ENCODE measurements at regions of chr10 and their contacts with region 1.

Region 1: DNA sequence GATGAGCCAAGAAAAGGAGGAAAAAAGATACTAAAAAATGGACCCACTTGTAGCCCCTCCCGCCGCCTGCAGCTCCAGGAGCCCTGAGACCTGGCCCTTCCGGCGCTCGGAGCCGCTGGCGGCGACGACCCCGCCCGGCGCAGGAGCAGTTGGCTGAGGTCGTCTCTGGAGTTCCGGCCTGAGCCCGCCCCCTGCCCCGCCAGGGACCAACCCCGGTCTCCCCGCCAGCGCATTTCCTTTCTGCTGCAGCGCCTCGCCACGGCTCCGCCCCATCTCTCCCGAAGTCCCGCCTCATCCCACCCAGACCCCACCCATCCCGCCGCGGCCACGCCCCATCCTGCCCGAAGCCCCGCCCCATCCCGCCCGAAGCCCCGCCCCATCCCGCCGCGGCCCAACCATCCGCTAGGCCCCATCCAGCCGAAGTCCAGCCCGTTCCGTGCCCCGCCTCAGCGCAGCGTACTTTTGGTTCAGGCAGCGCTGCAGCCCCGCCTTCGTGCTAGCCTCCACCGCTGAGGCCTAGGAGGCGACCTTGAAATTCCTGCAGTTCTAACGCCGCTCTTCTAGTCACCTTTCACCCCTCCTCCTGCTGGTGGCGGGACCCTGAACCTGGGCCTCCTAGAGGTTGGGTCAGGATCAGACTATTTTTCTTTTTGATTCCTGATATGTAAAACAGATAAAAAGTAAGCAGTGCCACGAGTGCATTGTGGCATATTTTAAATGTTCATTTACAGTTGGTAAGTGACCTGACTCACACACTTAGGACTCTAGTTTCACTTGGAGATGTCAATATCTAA is at the start of gene STN1:
- DNase-seq: peak; percentile 93 to 96 (median 95)
- H3K4me3 ChIP-seq: peak within 1 kb of the TSS; percentile 69 to 95
- H3K4me3 Mint-ChIP-seq: peak within 1 kb of the TSS; percentile 92 to 99 (median 96)
- H3K27ac ChIP-seq: peak within 1 kb of the TSS; percentile 82
- H3K27ac Mint-ChIP-seq: peak within 1 kb of the TSS; percentile 91 to 98 (median 95)
- H3K4me1 ChIP-seq: peaks cover 53% of the 10 kb centered on the region
- H3K4me1 Mint-ChIP-seq: peaks cover 18 to 50% (median 30%) of the 10 kb centered on the region in 4 donors
- H3K27me3 ChIP-seq: no peaks in the 10 kb centered on the region
- H3K27me3 Mint-ChIP-seq: no peaks in the 10 kb centered on the region
- total RNA-seq, gene STN1: 30.4 to 31.6 TPM

Region 2: DNA sequence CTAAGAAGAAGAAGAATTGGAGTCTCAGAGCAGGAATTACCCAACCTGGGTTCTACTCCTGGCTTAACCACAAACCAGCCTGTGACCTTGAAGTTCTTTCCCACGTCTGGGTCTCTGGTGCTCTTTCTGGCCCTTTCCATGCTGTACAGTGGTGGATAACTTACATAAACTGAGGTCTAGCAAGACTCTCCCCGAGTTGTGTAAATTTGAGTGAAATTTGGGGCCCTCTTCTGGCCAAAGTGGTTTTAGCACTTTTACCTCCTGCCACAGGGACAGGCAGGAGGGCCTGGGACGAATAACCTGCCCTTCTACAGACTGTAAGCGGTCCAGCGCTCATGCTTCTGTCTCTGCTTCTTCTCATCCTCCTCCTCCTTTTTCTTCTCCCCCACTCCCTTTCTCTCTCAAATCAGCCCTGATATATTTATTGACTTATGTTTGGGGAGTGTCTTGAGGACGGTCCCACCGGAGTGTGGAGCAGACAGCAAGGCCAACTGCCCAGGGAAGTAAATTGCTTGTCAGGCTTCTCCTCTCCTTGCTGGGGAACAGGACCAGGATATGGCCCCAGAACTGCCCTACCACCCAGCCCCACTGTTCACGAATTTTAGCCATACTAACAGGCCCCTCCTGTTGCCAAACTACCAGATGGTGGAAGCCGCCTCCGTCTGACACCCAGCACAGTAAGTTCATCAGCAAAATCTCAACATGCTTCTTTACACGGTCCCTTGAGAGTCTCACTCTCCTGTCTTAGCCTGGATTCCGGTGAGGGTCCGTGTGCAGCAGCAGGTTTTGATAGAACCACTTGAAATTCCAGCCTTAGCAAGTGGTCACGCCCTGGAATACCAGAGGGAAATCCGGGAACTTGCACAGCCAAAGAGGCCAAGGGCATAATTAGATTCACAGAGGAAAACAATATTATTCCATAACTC is 58.8 kb before region 1 on chr10:
- CTCF ChIA-PET with region 1: no interaction called
- POLR2A ChIA-PET with region 1: no interaction called
- intact Hi-C with region 1: no loop called
- DNase-seq: peak; percentile 51 to 58 (median 54)
- H3K4me3 ChIP-seq: no peak overlapping the region
- H3K4me3 Mint-ChIP-seq: peak overlapping the region in 1 of 8 donors; percentile 15
- H3K27ac ChIP-seq: no peak overlapping the region
- H3K27ac Mint-ChIP-seq: no peak overlapping the region
- H3K4me1 ChIP-seq: peaks cover 13% of the 10 kb centered on the region
- H3K4me1 Mint-ChIP-seq: peaks cover 5 to 12% (median 8%) of the 10 kb centered on the region in 4 donors
- H3K27me3 ChIP-seq: peaks cover 8% of the 10 kb centered on the region
- H3K27me3 Mint-ChIP-seq: peaks cover 5 to 13% of the 10 kb centered on the region in 2 donors

Region 3: GRCh38 chr10:103895411-103896186 is 22.7 kb before region 1 on chr10:
- CTCF ChIA-PET with region 1: interaction called, 10 read pairs
- POLR2A ChIA-PET with region 1: interaction called, 25 read pairs
- intact Hi-C with region 1: no loop called
- DNase-seq: no peak
- H3K4me3 ChIP-seq: no peak overlapping the region
- H3K4me3 Mint-ChIP-seq: peak overlapping the region in 4 of 8 donors; percentile 11 to 87 (median 48)
- H3K27ac ChIP-seq: peak overlapping the region; percentile 11
- H3K27ac Mint-ChIP-seq: peak overlapping the region; percentile 38 to 95 (median 86)
- H3K4me1 ChIP-seq: peaks cover 40% of the 10 kb centered on the region
- H3K4me1 Mint-ChIP-seq: peaks cover 39 to 64% (median 51%) of the 10 kb centered on the region in 4 donors
- H3K27me3 ChIP-seq: no peaks in the 10 kb centered on the region
- H3K27me3 Mint-ChIP-seq: no peaks in the 10 kb centered on the region

Region 4: DNA sequence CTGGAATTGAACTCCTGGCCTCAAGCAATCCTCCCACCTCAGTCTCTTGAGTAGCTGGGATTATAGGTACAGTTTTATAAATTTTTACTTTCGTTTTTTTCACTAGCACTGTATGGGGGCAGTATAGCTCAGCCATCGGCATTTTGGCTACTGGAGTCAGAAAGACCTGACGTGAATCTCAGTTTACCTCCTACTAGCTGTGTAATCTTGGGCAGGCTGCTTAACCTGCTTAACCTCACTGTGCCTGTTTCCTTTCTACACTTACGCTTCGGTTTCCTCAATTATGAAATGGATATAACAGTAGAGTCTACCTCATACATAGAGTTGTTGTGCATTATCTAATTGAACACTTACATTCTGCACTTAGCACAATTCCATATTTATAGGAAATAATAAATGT is 17.0 kb before region 1 on chr10:
- CTCF ChIA-PET with region 1: interaction called, 10 read pairs
- POLR2A ChIA-PET with region 1: interaction called, 25 read pairs
- intact Hi-C with region 1: no loop called
- DNase-seq: no peak
- H3K4me3 ChIP-seq: no peak overlapping the region
- H3K4me3 Mint-ChIP-seq: peak overlapping the region; percentile 12 to 73 (median 44)
- H3K27ac ChIP-seq: peak overlapping the region; percentile 33
- H3K27ac Mint-ChIP-seq: peak overlapping the region; percentile 15 to 89 (median 74)
- H3K4me1 ChIP-seq: peaks cover 53% of the 10 kb centered on the region
- H3K4me1 Mint-ChIP-seq: peaks cover 28 to 65% (median 43%) of the 10 kb centered on the region in 4 donors
- H3K27me3 ChIP-seq: no peaks in the 10 kb centered on the region
- H3K27me3 Mint-ChIP-seq: no peaks in the 10 kb centered on the region

Region 5: GRCh38 chr10:103966671-103967447 is 48.6 kb after region 1 on chr10 and contains the start of gene SLK:
- CTCF ChIA-PET with region 1: interaction called, 3 read pairs
- POLR2A ChIA-PET with region 1: interaction called, 9 read pairs
- intact Hi-C with region 1: loop called (anchors 2 kb)
- DNase-seq: peak; percentile 78 to 90 (median 86)
- H3K4me3 ChIP-seq: peak within 1 kb of the TSS; percentile 59 to 99
- H3K4me3 Mint-ChIP-seq: peak within 1 kb of the TSS; percentile 94 to 100 (median 98)
- H3K27ac ChIP-seq: peak within 1 kb of the TSS; percentile 74
- H3K27ac Mint-ChIP-seq: peak within 1 kb of the TSS; percentile 95 to 98 (median 96)
- H3K4me1 ChIP-seq: peaks cover 33% of the 10 kb centered on the region
- H3K4me1 Mint-ChIP-seq: peaks cover 27 to 48% (median 36%) of the 10 kb centered on the region in 4 donors
- H3K27me3 ChIP-seq: no peaks in the 10 kb centered on the region
- H3K27me3 Mint-ChIP-seq: no peaks in the 10 kb centered on the region
- total RNA-seq, gene SLK: 30.9 to 31.1 TPM

Region 6: GRCh38 chr10:104231784-104232612 is 313.7 kb after region 1 on chr10 and contains the start of gene CFAP43:
- CTCF ChIA-PET with region 1: no interaction called
- POLR2A ChIA-PET with region 1: no interaction called
- intact Hi-C with region 1: loop called (anchors 2 kb)
- DNase-seq: peak; percentile 99 to 100 (median 99)
- H3K4me3 ChIP-seq: peak within 1 kb of the TSS; percentile 57 to 64
- H3K4me3 Mint-ChIP-seq: peak within 1 kb of the TSS; percentile 84 to 94 (median 90)
- H3K27ac ChIP-seq: peak within 1 kb of the TSS; percentile 49
- H3K27ac Mint-ChIP-seq: peak within 1 kb of the TSS; percentile 82 to 96 (median 92)
- H3K4me1 ChIP-seq: peaks cover 6% of the 10 kb centered on the region
- H3K4me1 Mint-ChIP-seq: peaks cover 6 to 19% (median 11%) of the 10 kb centered on the region in 4 donors
- H3K27me3 ChIP-seq: peaks cover 5% of the 10 kb centered on the region
- H3K27me3 Mint-ChIP-seq: peaks cover 9 to 17% of the 10 kb centered on the region in 2 donors
- total RNA-seq, gene CFAP43: not detected

Region 7: DNA sequence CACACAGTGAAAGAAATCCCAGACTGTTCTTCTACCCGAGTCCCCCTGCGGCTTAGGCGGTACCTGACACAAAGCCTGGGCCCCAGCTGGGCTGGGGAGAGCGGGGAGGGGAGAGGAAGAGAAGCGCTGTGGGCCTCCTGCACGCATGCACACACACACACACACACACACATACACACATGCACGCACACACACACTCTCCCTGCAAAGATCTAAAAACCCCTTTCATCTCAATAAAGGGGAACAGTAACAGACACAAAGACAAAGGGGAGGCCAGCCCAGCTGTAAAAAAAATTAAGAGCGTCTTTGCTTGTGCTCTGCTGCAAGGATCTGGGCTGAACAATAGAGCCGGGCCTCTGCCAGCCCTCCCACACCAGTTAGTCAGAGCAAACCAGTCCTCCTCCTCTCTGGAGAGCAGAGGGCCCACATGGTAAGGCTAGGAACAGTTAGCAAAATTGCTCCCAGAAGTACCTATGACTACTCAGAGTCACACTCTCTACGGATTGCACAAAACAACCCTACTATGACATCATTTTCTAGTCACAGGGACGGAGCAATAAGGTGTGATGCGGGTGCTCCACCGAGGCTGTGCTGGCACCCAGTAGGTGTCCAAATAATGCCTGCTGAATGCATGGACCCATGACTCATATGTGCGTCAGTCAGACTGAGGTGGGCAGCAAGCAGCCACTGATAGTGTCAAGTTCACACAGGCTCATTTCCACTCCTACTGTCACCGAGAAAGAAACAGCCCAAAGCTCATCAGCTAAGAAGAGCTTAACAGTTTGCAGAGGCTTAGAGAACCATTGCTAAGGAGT is 410.9 kb after region 1 on chr10:
- CTCF ChIA-PET with region 1: no interaction called
- POLR2A ChIA-PET with region 1: no interaction called
- intact Hi-C with region 1: loop called (anchors 10 kb)
- DNase-seq: peak; percentile 73 to 96 (median 77)
- H3K4me3 ChIP-seq: peak overlapping the region; percentile 26 to 32
- H3K4me3 Mint-ChIP-seq: peak overlapping the region; percentile 75 to 90 (median 82)
- H3K27ac ChIP-seq: peak overlapping the region; percentile 64
- H3K27ac Mint-ChIP-seq: peak overlapping the region; percentile 89 to 98 (median 96)
- H3K4me1 ChIP-seq: peaks cover 100% of the 10 kb centered on the region
- H3K4me1 Mint-ChIP-seq: peaks cover 68 to 100% (median 93%) of the 10 kb centered on the region in 4 donors
- H3K27me3 ChIP-seq: no peaks in the 10 kb centered on the region
- H3K27me3 Mint-ChIP-seq: no peaks in the 10 kb centered on the region